Calu3 (cell line): ENCODE measurements at regions of chr2 and their contacts with region 1.

Region 1: DNA sequence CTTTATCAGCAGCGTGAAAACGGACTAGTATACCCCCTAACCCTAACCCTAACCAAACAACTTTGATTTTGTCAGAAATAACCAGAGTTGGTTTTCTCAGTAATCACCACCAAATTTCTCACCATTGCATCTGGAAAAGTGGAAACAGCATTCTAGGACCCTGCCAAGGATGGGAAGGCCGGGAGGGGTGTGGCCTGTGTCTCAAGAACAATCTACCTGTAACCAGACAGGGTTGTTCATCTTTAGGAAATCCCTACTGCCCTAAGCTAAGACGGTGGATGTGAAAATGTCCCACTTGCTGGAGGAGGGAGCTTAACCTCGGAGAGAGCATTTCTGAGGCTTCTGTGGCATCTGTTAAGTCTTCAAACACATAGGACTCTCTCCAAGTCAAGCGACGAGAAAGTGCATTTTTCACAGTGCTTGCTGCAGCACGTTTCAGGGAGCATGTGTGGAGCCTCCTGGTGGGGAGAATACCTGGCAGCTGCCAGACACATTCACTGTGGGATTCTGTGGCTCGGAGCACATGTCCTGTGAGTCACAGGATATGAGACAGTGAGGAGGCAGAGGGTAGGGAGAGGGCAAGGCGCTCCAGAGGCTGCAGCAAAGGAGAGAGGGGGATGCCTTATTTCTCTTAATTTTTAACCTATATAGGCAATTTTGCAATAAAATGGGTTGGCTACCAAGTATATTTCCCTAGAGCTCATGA is 207.5 kb downstream of the SPP2 start:
- DNase-seq: peak; percentile 89
- H3K4me3 Mint-ChIP-seq: peak overlapping the region; percentile 44
- H3K27ac Mint-ChIP-seq: peak overlapping the region; percentile 91
- H3K4me1 Mint-ChIP-seq: peaks cover 48% of the 10 kb centered on the region
- H3K27me3 Mint-ChIP-seq: no peaks in the 10 kb centered on the region
- CTCF ChIP-seq: peak; percentile 80

Region 2: DNA sequence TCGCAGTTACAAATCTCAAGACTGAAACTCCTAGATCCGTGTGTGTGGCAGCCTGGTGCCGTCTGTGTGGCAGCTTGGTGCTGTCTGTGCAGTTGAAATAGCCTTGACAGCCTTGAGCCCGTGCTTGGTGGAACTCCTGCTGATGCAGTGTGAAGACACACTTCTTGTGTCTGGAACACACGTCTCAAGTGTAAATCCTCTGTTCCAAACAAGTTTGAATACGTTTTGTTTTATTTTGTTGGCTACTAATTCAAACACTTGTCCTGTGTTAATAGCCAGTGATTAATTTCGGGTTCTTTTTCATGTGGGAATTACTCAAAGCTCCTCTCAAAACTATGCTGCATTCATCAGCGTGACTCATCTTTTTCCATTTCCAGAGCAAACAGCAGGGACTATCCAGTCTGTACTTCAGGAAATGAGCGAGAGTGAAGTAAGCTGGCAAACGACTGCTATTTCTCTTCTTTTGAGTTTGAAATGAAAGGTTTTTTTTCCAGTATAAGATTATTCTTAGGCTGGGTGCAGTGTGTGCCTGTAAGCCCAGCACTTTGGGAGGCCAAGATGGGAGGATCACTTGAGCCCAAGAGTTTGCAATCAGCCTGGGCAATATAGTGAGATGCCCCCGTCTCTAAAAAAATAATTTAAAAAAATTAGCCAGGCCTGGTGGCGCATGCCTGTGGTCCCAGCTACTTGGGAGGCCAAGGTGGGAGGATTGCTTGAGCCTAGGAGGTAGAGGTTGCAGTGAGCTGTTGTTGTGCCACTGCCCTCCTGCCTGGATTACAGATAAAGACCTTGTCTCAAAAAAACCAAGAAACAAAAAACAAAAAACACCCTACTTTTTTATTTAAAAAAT is 54.6 kb before region 1 on chr2:
- CTCF ChIA-PET with region 1: interaction called, 4 read pairs
- intact Hi-C with region 1: loop called (anchors 2 kb)
- DNase-seq: peak; percentile 51
- H3K4me3 Mint-ChIP-seq: peak overlapping the region; percentile 36
- H3K27ac Mint-ChIP-seq: peak overlapping the region; percentile 95
- H3K4me1 Mint-ChIP-seq: peaks cover 38% of the 10 kb centered on the region
- H3K27me3 Mint-ChIP-seq: peaks cover 1% of the 10 kb centered on the region
- CTCF ChIP-seq: no peak

Region 3: DNA sequence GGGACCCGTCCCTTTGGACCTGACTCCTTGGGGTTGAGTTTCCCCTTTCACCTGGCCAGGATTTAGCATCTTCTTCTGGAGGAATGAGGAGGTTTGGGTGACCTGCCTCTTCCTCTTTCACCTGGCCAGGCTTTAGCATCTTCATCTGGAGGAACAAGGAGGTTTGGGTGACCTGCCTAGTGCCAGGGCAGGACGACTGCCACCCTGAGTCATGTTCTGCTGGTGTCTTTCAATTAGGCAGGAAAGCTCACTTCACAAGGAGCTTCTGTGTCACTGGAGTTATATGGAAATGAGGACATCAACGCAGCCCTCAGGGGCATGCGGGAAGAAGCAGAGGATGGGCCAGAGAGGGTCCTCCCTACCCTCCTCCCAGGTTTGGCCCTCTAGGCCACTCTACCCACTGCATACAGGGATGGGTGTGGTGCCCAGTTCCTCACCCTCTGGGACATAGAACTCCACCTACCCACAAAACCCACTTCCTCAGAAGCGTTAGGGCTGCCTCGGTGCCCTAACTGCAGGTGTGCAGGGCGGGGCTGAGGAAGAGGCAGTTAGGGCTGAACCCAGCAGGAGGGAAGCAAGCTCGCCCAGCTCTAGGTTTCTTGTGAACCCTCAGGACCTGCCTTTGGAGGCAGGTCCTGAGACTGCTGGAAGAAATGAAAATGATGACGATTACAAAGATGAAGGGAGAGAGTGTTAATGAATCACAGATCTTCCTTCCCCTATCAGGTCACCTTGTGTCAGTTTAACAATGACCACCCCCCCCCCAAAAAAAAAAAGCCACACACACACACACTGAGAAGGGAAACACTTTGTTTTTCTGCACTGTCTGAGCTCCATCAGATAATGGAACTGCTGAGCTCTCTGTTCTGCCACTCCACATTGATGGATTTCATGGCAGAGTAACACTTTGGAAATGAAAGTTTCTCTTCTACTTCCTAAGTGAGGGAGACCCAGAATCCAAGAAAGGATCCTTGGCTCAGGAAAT is 167.9 kb after region 1 on chr2:
- CTCF ChIA-PET with region 1: interaction called, 3 read pairs
- intact Hi-C with region 1: loop called (anchors 10 kb)
- DNase-seq: no peak
- H3K4me3 Mint-ChIP-seq: no peak overlapping the region
- H3K27ac Mint-ChIP-seq: peak overlapping the region; percentile 79
- H3K4me1 Mint-ChIP-seq: peaks cover 55% of the 10 kb centered on the region
- H3K27me3 Mint-ChIP-seq: no peaks in the 10 kb centered on the region
- CTCF ChIP-seq: no peak

Region 4: DNA sequence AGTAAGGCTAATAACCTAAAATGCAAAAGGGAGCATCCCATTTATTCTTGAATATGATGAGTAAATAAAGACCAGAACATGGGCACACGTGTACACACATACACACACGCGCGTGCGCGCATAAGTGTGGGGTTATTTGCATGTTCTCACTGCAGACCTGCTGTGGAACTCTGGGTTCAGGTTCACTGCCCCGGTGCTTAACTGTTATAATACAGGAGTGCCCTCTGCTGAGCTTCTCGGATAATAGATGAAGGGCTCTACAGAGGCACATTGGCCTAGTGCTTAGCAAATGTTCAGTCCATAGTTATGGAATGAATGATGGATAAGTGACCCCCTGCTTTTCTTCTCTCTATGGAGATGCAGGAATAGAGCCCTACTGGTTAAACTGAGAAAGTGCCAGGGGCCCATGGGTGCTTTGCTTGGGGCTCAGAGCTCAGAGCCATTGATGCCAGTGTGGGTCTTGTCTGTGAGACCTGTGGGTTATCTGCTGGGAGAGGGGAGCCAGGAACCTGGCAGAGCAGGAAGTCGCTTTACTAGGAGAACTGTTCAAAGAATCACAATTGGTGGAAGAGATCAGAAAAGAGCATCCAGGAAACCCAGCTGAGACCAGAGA is 242.5 kb after region 1 on chr2:
- CTCF ChIA-PET with region 1: interaction called, 7 read pairs
- intact Hi-C with region 1: loop called (anchors 5 kb)
- DNase-seq: peak; percentile 42
- H3K4me3 Mint-ChIP-seq: no peak overlapping the region
- H3K27ac Mint-ChIP-seq: no peak overlapping the region
- H3K4me1 Mint-ChIP-seq: peaks cover 32% of the 10 kb centered on the region
- H3K27me3 Mint-ChIP-seq: no peaks in the 10 kb centered on the region
- CTCF ChIP-seq: peak; percentile 42